ENCODE measurements at regions of chr15 and their contacts with region 1.

Region 1: GRCh38 chr15:55649054-55649423 is 60.9 kb upstream of the PYGO1 start:
- DNase-seq: no peak
- ATAC-seq: no peak
- H3K4me3 ChIP-seq: no peak overlapping the region
- H3K27ac ChIP-seq: no peak overlapping the region
- H3K4me1 ChIP-seq: no peaks in the 10 kb centered on the region
- H3K27me3 ChIP-seq: no peaks in the 10 kb centered on the region
- CTCF ChIP-seq: no peak
- EP300 ChIP-seq: no peak
- POLR2A ChIP-seq: no peak
- RAD21 ChIP-seq: no peak

Region 2: DNA sequence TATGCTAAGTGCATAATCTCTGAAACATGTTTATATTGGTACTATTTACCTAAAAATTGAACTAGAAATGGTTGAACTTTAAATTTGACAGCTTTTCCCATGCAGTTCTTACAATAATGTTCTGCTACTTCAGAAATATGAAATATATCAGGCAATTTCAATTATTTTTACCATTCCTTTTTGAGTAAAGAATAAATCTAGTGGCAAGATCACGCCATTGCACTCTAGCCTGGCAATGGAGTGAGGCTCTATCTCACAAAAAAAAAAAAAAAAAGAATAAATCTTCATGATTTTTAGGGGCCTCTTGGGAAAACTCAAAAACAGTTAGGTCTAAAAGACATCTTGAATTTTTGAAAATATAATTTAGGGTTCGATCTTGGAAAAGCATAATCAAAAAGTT is 130.4 kb before region 1 on chr15:
- CTCF ChIA-PET with region 1: interaction called, 3 read pairs
- POLR2A ChIA-PET with region 1: no interaction called
- RAD21 ChIA-PET with region 1: interaction called, 3 read pairs
- SMC1A ChIA-PET with region 1: no interaction called
- in situ Hi-C with region 1: no loop called
- intact Hi-C with region 1: loop called (anchors 5 kb)
- DNase-seq: no peak
- ATAC-seq: no peak
- H3K4me3 ChIP-seq: no peak overlapping the region
- H3K27ac ChIP-seq: no peak overlapping the region
- H3K4me1 ChIP-seq: no peaks in the 10 kb centered on the region
- H3K27me3 ChIP-seq: no peaks in the 10 kb centered on the region; a peak in 1 of 4 replicates
- CTCF ChIP-seq: 0 out of 6 replicates have a peak, but pooled peaks of 1 of the 3 experiments have one; percentile 12
- EP300 ChIP-seq: no peak
- POLR2A ChIP-seq: no peak
- RAD21 ChIP-seq: no peak

Region 3: DNA sequence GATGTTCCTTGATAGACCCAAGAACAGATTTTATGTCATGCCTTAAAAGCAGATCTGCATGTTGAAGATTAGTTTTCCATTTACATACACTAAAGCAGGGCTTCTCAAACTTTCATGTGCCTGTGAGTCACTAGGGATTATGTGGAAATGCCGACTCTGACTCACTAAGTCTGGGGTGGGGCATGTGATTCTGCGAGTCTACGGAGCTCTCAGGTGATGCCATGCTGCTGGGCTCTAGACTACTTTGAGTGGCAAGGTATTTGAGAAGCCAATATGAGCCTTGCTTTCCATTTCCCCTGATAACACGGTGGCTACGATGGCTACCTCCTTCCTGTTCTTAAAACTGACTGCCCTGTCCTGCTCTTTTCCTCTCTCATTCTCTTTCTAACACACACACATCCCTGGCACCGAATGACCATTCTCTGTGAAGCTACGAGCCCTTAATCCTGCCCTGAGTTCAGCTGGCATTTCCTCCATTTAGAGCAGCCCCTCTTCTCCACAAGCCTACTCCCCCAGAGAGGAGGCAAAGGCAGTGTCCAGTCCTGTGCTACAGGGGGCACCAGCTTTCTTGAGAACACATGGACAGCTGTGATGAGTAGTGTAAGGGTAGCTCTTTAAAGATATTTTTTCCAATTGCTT is 21.2 kb before region 1 on chr15:
- CTCF ChIA-PET with region 1: no interaction called
- POLR2A ChIA-PET with region 1: no interaction called
- RAD21 ChIA-PET with region 1: no interaction called
- SMC1A ChIA-PET with region 1: no interaction called
- in situ Hi-C with region 1: no loop called
- intact Hi-C with region 1: no loop called
- DNase-seq: no peak
- ATAC-seq: no peak; the same call in 2 of the 3 replicates
- H3K4me3 ChIP-seq: no peak overlapping the region
- H3K27ac ChIP-seq: no peak overlapping the region
- H3K4me1 ChIP-seq: no peaks in the 10 kb centered on the region
- H3K27me3 ChIP-seq: no peaks in the 10 kb centered on the region
- CTCF ChIP-seq: no peak
- EP300 ChIP-seq: no peak
- POLR2A ChIP-seq: no peak
- RAD21 ChIP-seq: no peak

Region 4: GRCh38 chr15:55775316-55775715 is 126.3 kb after region 1 on chr15:
- CTCF ChIA-PET with region 1: interaction called, 5 read pairs
- POLR2A ChIA-PET with region 1: no interaction called
- RAD21 ChIA-PET with region 1: no interaction called
- SMC1A ChIA-PET with region 1: interaction called, 13 read pairs
- in situ Hi-C with region 1: no loop called
- intact Hi-C with region 1: no loop called
- DNase-seq: no peak
- ATAC-seq: no peak
- H3K4me3 ChIP-seq: no peak overlapping the region
- H3K27ac ChIP-seq: no peak overlapping the region
- H3K4me1 ChIP-seq: no peaks in the 10 kb centered on the region
- H3K27me3 ChIP-seq: no peaks in the 10 kb centered on the region; a peak in 1 of 4 replicates
- CTCF ChIP-seq: no peak
- EP300 ChIP-seq: no peak
- POLR2A ChIP-seq: no peak
- RAD21 ChIP-seq: no peak

Region 5: DNA sequence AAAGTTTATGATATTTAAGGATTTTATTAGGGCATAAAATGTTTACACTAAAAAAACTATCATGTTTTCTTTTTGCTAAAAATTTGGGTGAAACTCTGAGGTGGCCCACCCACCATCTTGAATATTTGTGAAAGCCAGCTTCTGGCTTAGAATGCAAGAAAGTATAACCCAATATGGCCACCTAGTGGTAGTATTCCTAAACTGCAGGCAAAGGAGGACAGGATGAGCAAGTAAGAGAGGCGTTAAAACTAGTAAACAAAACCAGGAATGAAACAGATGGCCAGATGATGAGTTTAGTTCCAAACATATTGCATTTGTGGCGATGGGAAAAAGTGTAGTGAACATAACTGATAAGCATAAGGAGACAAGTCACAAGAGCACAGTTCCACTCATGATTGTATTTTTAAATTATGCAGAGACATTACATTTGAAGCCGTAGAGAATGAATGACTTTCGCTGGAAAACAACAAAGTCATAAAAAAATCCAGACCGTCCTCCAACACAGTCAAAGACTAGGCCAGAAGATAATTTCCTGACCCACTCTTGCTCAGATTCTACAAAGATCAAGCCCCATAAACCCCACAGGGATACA is 197.2 kb after region 1 on chr15:
- CTCF ChIA-PET with region 1: interaction called, 24 read pairs
- POLR2A ChIA-PET with region 1: no interaction called
- RAD21 ChIA-PET with region 1: interaction called, 15 read pairs
- SMC1A ChIA-PET with region 1: interaction called, 12 read pairs
- in situ Hi-C with region 1: loop called (anchors 5 kb)
- intact Hi-C with region 1: loop called (anchors 1 kb)
- DNase-seq: peak; percentile 35
- ATAC-seq: peak; percentile 82
- H3K4me3 ChIP-seq: no peak overlapping the region
- H3K27ac ChIP-seq: no peak overlapping the region
- H3K4me1 ChIP-seq: no peaks in the 10 kb centered on the region
- H3K27me3 ChIP-seq: no peaks in the 10 kb centered on the region
- CTCF ChIP-seq: peak; percentile 79 to 83 (median 81)
- EP300 ChIP-seq: no peak
- POLR2A ChIP-seq: no peak
- RAD21 ChIP-seq: peak; percentile 92

Region 6: DNA sequence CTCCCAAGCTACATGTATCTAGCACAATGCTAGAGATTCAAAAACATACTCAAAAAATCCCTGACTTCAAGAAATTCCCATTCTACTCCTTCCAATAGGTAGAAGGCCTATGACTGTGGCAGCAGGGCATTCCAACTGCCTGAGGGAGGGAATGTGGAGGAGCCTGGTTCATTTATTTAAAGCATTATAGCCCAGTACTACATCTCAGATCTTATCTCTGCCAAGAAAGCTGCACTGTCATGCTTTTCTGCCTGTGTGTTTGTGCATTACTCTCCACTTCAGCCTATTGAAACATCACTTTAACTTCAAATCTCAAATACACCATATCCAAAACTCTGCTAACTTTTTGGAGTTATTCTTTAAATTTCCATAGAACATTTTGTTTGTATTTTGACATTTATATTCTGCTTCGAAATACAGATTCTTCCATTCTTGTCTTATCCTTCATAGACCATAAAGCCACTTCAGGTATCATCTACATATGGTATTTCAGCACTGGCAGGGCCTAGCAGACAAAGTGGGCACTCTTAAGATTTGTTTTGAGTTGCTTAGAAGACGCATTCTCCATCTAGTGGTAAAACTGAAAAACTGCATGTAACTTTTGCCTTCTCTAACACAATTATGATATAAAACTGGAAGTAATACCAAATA is 403.5 kb after region 1 on chr15:
- CTCF ChIA-PET with region 1: interaction called, 5 read pairs
- POLR2A ChIA-PET with region 1: no interaction called
- RAD21 ChIA-PET with region 1: no interaction called
- SMC1A ChIA-PET with region 1: no interaction called
- in situ Hi-C with region 1: no loop called
- intact Hi-C with region 1: loop called (anchors 10 kb)
- DNase-seq: no peak
- ATAC-seq: peak; percentile 76
- H3K4me3 ChIP-seq: no peak overlapping the region
- H3K27ac ChIP-seq: no peak overlapping the region
- H3K4me1 ChIP-seq: no peaks in the 10 kb centered on the region
- H3K27me3 ChIP-seq: no peaks in the 10 kb centered on the region
- CTCF ChIP-seq: peak; percentile 60 to 70 (median 61)
- EP300 ChIP-seq: no peak
- POLR2A ChIP-seq: no peak
- RAD21 ChIP-seq: peak; percentile 59